Activated naive CD4-positive, alpha-beta T cell treated with anti-CD3 and anti-CD28 coated beads for 36 hours (primary cell): ENCODE measurements at regions of chr17 and their contacts with region 1.

Region 1: DNA sequence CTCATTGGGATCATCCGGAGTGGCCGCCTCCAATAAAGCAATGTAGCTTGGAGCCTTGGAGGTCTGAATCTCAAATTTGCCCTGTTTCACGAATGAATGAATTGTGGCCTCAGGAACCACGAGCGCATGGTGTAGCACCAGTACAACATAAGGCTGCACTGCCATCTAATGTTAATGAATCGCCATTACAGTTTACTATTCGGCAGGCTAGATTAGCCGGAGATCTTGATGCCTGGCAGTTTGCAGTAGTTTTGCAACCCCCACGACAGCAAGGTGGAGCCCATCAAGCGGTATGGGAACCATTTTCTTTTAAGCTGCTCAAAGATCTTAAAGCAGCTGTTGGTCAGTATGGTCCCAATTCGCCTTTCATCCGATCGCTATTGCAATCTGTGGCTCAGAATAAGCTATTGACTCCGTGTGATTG is 18.8 kb downstream of the ALOX15B start:
- DNase-seq: peak; percentile 60
- H3K4me3 Mint-ChIP-seq: no peak overlapping the region
- H3K27ac Mint-ChIP-seq: no peak overlapping the region
- H3K4me1 Mint-ChIP-seq: peaks cover 3% of the 10 kb centered on the region
- H3K27me3 Mint-ChIP-seq: peaks cover 49% of the 10 kb centered on the region

Region 2: GRCh38 chr17:7856883-7857723 is 200.6 kb before region 1 on chr17 and contains the start of gene NAA38:
- CTCF ChIA-PET with region 1: interaction called, 6 read pairs
- intact Hi-C with region 1: loop called (anchors 2 kb)
- DNase-seq: peak; percentile 98
- H3K4me3 Mint-ChIP-seq: no peak within 1 kb of the TSS
- H3K27ac Mint-ChIP-seq: no peak within 1 kb of the TSS
- H3K4me1 Mint-ChIP-seq: peaks cover 22% of the 10 kb centered on the region
- H3K27me3 Mint-ChIP-seq: no peaks in the 10 kb centered on the region
- total RNA-seq, gene NAA38: 75.0 to 75.3 TPM

Region 3: GRCh38 chr17:7931709-7932482 is 125.8 kb before region 1 on chr17 and contains the starts of genes CNTROB and TRAPPC1:
- CTCF ChIA-PET with region 1: interaction called, 11 read pairs
- intact Hi-C with region 1: no loop called
- DNase-seq: peak; percentile 100
- H3K4me3 Mint-ChIP-seq: peak within 1 kb of the TSS; percentile 91
- H3K27ac Mint-ChIP-seq: peak within 1 kb of the TSS; percentile 87
- H3K4me1 Mint-ChIP-seq: peaks cover 38% of the 10 kb centered on the region
- H3K27me3 Mint-ChIP-seq: no peaks in the 10 kb centered on the region
- total RNA-seq, gene CNTROB: 49.3 to 56.3 TPM
- total RNA-seq, gene TRAPPC1: 162 to 172 TPM

Region 4: DNA sequence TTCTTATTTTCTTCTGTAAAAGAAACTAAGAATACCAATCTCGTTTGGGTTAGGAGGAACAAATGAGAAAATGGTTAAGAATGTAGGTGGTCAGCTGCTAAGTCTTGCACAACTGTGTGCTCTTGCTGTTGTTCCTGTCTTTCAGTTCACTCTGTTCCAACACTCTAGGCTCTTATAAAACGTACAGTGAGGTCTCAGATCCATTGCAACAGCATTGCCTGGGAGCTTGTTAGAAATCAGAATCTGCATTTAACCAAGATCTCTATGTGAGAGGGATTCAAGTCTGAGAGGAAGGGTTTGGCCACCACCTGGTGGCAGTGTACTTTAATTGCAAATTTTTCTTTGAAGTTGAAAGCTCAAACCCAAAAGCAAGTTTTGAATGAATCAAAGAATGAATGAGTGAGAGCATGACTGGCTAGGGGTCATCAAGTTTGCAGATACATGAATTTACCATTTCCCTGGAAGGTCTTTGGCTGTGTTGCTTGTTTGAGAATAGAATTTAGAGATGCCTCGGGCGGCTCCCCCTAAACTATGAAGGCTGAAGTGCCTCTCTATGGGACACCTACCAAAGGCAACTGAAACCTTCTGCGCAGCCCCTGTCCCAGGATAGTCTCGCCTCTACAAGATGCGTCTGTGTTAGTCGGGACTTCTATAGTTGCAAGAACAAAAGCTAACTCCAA is 16.3 kb before region 1 on chr17:
- CTCF ChIA-PET with region 1: interaction called, 19 read pairs
- intact Hi-C with region 1: no loop called
- DNase-seq: peak; percentile 62
- H3K4me3 Mint-ChIP-seq: no peak overlapping the region
- H3K27ac Mint-ChIP-seq: no peak overlapping the region
- H3K4me1 Mint-ChIP-seq: peaks cover 3% of the 10 kb centered on the region
- H3K27me3 Mint-ChIP-seq: peaks cover 22% of the 10 kb centered on the region

Region 5: DNA sequence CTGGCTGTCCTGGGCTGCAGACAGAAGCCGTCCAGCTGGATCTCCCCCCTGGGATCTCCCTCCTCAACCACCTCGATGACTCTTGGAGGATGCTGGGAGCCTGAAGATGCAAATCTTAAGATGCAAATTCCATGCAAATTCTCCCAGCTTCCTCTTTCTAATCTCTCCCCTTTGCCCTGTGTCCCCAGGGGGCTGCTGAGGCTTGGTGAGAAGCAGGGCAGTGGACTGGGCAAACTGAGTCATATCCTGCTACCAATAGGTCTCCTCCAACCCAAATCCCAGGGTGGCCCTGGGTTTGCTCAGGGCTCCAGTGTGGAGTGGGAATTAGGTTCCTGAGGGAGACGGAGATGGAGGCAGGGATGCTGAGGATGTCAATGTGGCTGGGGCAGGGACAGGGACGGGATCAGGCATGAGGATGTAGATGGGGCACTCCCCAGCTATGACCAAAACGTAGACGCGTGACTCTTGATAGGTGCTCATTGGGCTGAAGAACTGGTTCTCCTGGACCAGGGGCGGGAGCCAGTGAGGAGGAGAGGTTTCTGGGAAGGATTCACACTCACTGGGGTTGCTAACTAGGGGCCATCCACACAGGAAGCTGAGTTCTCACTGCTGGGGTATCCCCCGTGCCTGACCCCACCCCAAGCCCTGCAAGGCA is 33.5 kb after region 1 on chr17:
- CTCF ChIA-PET with region 1: interaction called, 29 read pairs
- intact Hi-C with region 1: no loop called
- DNase-seq: no peak
- H3K4me3 Mint-ChIP-seq: no peak overlapping the region
- H3K27ac Mint-ChIP-seq: no peak overlapping the region
- H3K4me1 Mint-ChIP-seq: peaks cover 8% of the 10 kb centered on the region
- H3K27me3 Mint-ChIP-seq: peaks cover 15% of the 10 kb centered on the region

Region 6: GRCh38 chr17:8300627-8301242 is 243.0 kb after region 1 on chr17:
- CTCF ChIA-PET with region 1: interaction called, 17 read pairs
- intact Hi-C with region 1: loop called (anchors 1 kb)
- DNase-seq: peak; percentile 67
- H3K4me3 Mint-ChIP-seq: no peak overlapping the region
- H3K27ac Mint-ChIP-seq: no peak overlapping the region
- H3K4me1 Mint-ChIP-seq: peaks cover 7% of the 10 kb centered on the region
- H3K27me3 Mint-ChIP-seq: no peaks in the 10 kb centered on the region